ENCODE measurements at regions of chr5 and their contacts with region 1.

Region 1: GRCh38 chr5:180908998-180909731 is 10.2 kb downstream of the BTNL8 start:
- DNase-seq: no peak
- ATAC-seq: no peak
- H3K4me3 ChIP-seq: no peak overlapping the region
- H3K4me3 Mint-ChIP-seq: no peak overlapping the region
- H3K27ac ChIP-seq: no peak overlapping the region
- H3K27ac Mint-ChIP-seq: no peak overlapping the region
- H3K4me1 ChIP-seq: no peaks in the 10 kb centered on the region
- H3K4me1 Mint-ChIP-seq: no peaks in the 10 kb centered on the region
- H3K27me3 ChIP-seq: peaks cover 8 to 11% of the 10 kb centered on the region in 2 experiments
- H3K27me3 Mint-ChIP-seq: peaks cover 26% of the 10 kb centered on the region
- CTCF ChIP-seq: no peak

Region 2: DNA sequence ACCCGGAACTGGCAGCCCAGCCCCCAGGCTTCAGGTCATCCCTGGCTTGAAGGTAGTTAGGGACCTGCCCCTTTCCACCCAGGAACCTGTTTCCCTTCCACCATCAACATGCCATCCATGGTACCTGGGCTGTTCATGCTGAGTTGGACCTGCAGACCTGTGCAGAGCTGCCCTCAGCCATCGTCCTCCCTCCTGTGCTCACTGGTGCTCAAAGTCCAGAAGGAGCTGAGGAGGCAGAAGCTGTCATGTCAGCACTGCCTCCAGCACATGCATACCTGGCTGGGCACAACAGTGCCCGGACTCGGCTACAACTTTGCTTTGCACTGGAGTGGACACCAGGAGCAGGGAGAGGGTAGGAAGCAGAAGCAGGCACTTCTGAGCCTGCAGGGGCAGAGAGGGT is 26.0 kb after region 1 on chr5:
- CTCF ChIA-PET with region 1: no interaction called
- POLR2A ChIA-PET with region 1: no interaction called
- intact Hi-C with region 1: loop called in 1 of 2 experiments (anchors 2 kb)
- DNase-seq: no peak
- ATAC-seq: no peak
- H3K4me3 ChIP-seq: no peak overlapping the region
- H3K4me3 Mint-ChIP-seq: no peak overlapping the region
- H3K27ac ChIP-seq: no peak overlapping the region
- H3K27ac Mint-ChIP-seq: no peak overlapping the region
- H3K4me1 ChIP-seq: no peaks in the 10 kb centered on the region
- H3K4me1 Mint-ChIP-seq: no peaks in the 10 kb centered on the region
- H3K27me3 ChIP-seq: peaks cover 11 to 12% of the 10 kb centered on the region in 2 experiments
- H3K27me3 Mint-ChIP-seq: peaks cover 55% of the 10 kb centered on the region
- CTCF ChIP-seq: no peak